Left cardiac atrium (tissue), 4 donors: ENCODE measurements at regions of chr1 and their contacts with region 1.

Region 1: DNA sequence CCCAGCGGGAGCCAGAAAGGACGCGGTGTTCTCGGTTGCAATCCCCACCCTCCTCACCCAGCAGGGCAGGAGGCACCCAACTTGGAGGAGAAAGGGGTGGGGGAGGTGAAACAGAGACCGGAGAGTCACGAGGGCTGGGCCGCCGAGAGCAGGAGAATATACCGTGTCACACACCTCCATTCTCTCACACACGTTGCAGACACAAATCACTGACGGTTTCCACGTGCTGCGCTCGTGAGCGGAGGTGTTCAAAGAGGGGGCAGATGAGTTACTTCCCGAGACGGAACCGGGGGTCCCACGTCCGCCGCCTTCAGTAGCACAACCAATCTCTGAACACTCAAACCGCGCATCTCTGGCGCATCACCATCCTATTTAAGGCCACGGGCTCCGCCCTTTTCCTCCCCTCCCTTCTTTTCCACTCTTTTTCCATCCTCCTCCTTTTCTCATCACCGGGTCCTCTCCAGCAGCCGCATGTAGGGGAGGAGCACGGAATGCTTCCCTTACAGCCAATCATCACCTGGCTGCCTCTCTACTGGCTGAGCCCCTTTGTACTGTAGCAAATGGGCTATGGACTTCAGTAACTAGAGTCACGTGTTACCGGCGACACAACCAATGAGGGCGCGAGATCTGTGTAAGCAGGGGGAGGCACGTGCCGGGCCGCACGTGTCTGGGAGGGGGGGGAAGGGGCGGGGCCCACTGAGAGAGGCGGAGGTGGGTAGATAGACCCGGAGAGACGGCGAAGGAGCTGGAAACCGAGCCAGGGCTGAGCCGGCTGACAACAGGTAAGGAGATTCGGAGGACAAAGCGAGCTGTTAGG is at the start of gene CIART:
- DNase-seq: peak; percentile 95
- ATAC-seq: peak; percentile 97 to 98
- total RNA-seq, gene CIART: 9.8 to 14.1 TPM

Region 2: GRCh38 chr1:150259758-150260669 is 22.0 kb before region 1 on chr1:
- intact Hi-C with region 1: loop called in 1 of 2 experiments (anchors 2 kb)
- DNase-seq: no peak
- ATAC-seq: peak; percentile 56 to 77

Region 3: GRCh38 chr1:150606463-150607148 is 324.6 kb after region 1 on chr1:
- intact Hi-C with region 1: no loop called
- DNase-seq: no peak
- ATAC-seq: no peak